Activated B cell treated with CpG ODN at 0.5 μM for 24 hours (primary cell): ENCODE measurements at regions of chr11 and their contacts with region 1.

Region 1: DNA sequence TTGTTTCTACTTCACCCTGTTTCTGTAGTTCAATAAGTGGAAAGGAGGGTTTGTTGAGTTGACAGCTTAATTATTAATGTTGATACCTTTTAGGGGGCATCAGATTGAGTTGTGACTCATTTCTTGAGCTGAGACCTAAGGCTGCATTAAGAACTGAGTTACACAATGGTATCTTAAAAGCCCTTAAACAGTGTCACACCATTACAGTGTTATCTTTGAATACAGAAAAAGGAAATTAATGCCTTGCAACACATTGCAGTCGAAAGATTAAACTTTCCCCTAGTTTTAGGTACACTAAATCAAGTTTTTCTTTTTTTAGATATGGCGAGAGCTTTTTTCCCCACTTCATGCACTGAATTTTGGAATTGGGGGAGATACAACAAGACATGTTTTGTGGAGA is 16.7 kb downstream of the PAFAH1B2 start:
- DNase-seq: no peak
- ATAC-seq: no peak
- H3K4me3 Mint-ChIP-seq: no peak overlapping the region
- H3K27ac Mint-ChIP-seq: no peak overlapping the region
- H3K4me1 Mint-ChIP-seq: peaks cover 16% of the 10 kb centered on the region
- H3K27me3 Mint-ChIP-seq: no peaks in the 10 kb centered on the region
- CTCF ChIP-seq: no peak

Region 2: DNA sequence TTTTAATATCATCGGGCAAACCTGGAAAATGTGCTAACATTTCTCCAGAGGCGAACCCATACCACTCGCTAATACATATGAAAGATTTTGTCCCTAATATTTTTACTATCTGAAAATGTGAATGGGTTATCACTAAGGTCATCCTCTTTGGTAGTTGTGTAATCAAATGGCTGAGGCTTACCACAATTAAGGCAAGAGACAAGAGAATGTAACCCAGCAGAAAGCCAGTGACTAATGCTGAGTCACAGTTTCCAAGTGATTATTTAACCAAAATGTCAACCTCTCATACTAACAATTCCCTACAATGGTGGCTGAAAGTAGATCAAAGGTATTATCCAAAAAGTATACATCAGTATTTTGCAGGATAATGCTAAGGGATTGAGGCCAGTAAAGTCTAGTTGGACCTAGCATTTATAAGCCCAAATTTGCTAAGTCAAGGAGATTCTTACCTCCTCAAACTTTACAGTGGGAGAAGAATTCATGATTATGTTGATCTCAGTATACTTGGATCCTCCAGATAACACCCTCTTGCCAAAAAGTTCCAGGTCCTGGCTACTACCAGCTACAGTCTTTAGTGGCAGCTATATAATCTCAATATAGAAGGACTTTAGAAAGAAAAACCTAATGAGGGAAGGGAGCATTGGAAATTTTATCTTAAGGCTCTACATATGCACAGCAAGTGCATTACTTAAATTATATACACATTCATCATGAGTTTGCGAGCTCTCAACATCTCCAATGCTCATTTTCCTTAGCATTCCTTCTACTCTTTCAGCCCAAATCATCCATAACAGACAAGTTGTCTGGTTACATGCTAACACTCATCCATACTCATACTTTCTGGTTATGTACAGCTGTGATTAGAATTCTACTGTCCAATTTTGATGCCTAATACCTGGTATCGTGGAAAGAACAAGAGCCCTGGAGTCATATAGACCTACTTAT is 88.0 kb before region 1 on chr11:
- CTCF ChIA-PET with region 1: no interaction called
- POLR2A ChIA-PET with region 1: interaction called, 13 read pairs
- intact Hi-C with region 1: no loop called
- DNase-seq: no peak
- ATAC-seq: peak; percentile 48
- H3K4me3 Mint-ChIP-seq: no peak overlapping the region
- H3K27ac Mint-ChIP-seq: no peak overlapping the region
- H3K4me1 Mint-ChIP-seq: peaks cover 76% of the 10 kb centered on the region
- H3K27me3 Mint-ChIP-seq: no peaks in the 10 kb centered on the region
- CTCF ChIP-seq: no peak